ENCODE measurements at regions of chr2 and their contacts with region 1.

Region 1: DNA sequence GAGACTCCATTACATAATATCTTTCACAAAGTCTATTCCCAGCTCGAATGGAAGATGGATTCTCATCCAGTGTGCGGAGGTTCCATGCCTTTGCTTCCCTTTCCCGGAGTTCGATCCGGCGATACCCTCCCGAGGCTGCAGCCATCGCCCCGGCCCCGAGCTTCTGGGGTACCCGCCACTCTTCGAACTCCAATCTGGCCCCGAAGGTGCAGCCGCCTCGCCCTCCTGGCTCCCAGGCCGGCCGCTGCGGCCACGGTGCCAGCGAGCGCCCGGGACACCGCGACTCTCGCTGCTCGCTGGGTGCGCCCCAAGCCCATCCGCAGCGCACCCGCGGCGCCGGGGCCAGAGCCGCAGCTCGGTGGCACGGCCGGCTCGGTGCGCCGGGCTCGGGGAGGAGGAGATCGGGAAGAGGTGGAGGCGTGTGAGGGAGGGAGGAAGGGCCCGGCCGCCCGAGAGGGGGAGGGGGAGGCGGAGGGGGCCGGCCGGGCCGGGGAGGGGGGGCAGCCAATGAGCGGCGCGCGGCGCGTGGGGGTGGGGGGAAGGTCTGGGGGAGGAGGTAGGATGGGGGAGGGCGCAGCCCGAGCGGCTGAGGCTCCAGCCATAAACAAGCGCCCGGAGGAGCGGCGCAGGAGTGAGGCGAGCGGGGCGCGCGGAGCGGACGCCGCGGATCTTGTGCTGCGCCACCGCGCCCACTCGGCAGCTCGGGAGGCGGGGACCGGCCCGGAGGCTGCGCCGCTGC is at the start of gene CRIM1:
- DNase-seq: peak; percentile 47 to 92
- H3K4me3 ChIP-seq: peak within 1 kb of the TSS; percentile 81
- H3K27ac ChIP-seq: peak within 1 kb of the TSS; percentile 94 to 97
- H3K4me1 ChIP-seq: peaks cover 2 to 18% of the 10 kb centered on the region in 2 donors
- H3K27me3 ChIP-seq: no peaks in the 10 kb centered on the region
- CTCF ChIP-seq: no peak
- total RNA-seq, gene CRIM1: 273 TPM

Region 2: DNA sequence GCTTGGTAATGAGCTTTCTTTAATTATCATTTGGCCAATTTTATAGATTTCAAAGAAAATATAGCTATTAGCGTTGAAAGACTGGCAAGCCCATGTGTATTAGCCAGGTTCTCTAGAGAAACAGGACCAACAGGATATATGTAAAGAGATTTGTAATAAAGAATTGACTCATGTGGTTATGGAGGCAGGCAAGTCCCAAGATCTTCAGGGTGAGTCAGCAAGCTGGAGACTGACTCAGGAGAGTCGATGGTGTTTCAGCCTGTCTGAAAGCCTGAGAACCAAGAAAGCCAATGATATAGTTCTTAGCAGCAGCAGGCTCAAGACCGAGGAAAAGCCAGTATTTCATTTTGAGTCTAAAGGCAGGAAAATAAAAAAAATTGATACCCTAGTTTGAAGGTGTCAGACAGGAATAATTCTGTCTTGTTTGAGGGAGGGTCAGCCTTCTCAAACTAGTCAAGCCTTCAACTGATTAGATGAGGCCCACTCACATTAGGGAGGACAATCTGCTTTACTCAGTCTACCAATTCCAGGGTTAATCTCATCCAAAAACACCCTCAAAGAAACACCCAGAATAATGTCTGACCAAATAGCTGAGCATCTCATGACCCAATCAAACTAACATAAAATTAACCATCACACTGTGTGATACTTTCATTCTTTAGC is 78.0 kb before region 1 on chr2:
- intact Hi-C with region 1: no loop called
- DNase-seq: no peak
- H3K4me3 ChIP-seq: no peak overlapping the region
- H3K27ac ChIP-seq: no peak overlapping the region
- H3K4me1 ChIP-seq: no peaks in the 10 kb centered on the region
- H3K27me3 ChIP-seq: no peaks in the 10 kb centered on the region
- CTCF ChIP-seq: no peak

Region 3: GRCh38 chr2:36413218-36413617 is 57.9 kb after region 1 on chr2:
- intact Hi-C with region 1: loop called (anchors 5 kb)
- DNase-seq: no peak
- H3K4me3 ChIP-seq: peak overlapping the region in 1 of 2 donors; percentile 29
- H3K27ac ChIP-seq: peak overlapping the region; percentile 43 to 67
- H3K4me1 ChIP-seq: peaks cover 3 to 85% of the 10 kb centered on the region in 2 donors
- H3K27me3 ChIP-seq: no peaks in the 10 kb centered on the region
- CTCF ChIP-seq: no peak

Region 4: GRCh38 chr2:36459725-36460137 is 104.4 kb after region 1 on chr2:
- intact Hi-C with region 1: loop called (anchors 5 kb)
- DNase-seq: no peak
- H3K4me3 ChIP-seq: no peak overlapping the region
- H3K27ac ChIP-seq: peak overlapping the region; percentile 77 to 78
- H3K4me1 ChIP-seq: peaks cover 14 to 70% of the 10 kb centered on the region in 2 donors
- H3K27me3 ChIP-seq: no peaks in the 10 kb centered on the region
- CTCF ChIP-seq: peak; percentile 21 to 63 (median 29)

Region 5: DNA sequence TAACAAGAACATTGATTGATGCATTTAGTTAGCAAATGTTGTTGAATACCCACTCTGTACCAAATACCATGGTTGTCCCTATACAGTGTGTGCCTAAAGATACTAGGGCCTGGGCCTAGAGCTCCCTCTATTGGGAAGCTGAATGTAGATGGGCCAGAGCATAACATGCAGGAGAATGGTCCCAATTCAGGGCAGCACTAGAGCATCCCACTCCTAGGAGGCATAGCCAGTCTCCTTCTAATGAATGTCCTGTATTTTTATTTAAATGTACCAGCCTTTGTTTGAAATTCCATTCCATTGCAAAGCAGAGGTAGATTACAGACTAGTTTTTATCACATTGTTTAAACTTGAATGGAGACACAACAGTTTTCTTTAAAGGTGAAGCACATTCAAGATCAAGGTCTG is 152.1 kb after region 1 on chr2:
- intact Hi-C with region 1: loop called (anchors 1 kb)
- DNase-seq: no peak
- H3K4me3 ChIP-seq: no peak overlapping the region
- H3K27ac ChIP-seq: no peak overlapping the region
- H3K4me1 ChIP-seq: peaks cover 0 to 4% of the 10 kb centered on the region in 2 donors
- H3K27me3 ChIP-seq: no peaks in the 10 kb centered on the region
- CTCF ChIP-seq: peak; percentile 52 to 81 (median 54)

Region 6: GRCh38 chr2:36663851-36664695 is 308.8 kb after region 1 on chr2:
- intact Hi-C with region 1: loop called (anchors 1 kb)
- DNase-seq: no peak
- H3K4me3 ChIP-seq: no peak overlapping the region
- H3K27ac ChIP-seq: no peak overlapping the region
- H3K4me1 ChIP-seq: no peaks in the 10 kb centered on the region
- H3K27me3 ChIP-seq: no peaks in the 10 kb centered on the region
- CTCF ChIP-seq: peak; percentile 59 to 80 (median 79)